GM10248 (cell line): ENCODE measurements at regions of chr5 and their contacts with region 1.

Region 1: DNA sequence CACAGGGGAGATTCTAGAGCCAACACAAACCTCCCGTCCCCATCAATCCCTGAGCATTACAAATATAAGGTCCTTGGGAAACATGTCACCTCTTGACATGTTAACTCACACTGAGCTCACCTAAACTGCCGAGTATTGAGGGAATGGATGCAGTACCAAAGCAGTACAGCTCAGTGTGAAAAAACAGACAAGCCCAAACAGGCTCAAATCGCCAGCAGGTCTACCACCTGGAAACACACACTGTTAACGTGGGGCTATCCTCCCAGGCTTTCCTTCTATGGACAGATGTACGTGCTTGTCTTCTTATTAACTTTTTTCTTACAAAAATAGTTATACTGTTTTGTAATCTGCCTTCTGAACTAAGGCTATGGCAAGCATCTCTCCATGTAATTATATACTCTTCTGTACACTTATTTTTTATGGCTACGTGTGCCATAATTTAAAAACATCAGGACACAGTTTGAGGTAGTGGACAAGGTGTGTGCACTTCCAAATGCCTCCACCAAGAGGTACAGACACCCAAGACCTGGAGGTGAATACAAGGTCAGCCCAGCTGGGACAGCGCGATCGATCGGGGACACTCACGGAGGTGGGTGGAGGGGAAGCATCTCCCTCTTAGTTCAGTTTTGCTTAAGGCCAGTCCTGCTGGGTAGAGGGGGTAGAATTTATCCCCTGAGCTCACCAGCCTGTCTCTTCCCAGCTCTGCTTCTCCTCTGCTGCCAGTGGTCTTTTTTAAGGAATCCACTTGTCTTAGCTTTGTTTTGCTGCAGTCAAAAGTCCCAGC is 76.5 kb downstream of the DAP start:
- DNase-seq: peak; percentile 56
- CTCF ChIP-seq: no peak

Region 2: GRCh38 chr5:10635257-10635866 is 49.1 kb before region 1 on chr5:
- CTCF ChIA-PET with region 1: interaction called, 20 read pairs
- POLR2A ChIA-PET with region 1: interaction called, 16 read pairs
- DNase-seq: peak; percentile 85
- CTCF ChIP-seq: no peak

Region 3: DNA sequence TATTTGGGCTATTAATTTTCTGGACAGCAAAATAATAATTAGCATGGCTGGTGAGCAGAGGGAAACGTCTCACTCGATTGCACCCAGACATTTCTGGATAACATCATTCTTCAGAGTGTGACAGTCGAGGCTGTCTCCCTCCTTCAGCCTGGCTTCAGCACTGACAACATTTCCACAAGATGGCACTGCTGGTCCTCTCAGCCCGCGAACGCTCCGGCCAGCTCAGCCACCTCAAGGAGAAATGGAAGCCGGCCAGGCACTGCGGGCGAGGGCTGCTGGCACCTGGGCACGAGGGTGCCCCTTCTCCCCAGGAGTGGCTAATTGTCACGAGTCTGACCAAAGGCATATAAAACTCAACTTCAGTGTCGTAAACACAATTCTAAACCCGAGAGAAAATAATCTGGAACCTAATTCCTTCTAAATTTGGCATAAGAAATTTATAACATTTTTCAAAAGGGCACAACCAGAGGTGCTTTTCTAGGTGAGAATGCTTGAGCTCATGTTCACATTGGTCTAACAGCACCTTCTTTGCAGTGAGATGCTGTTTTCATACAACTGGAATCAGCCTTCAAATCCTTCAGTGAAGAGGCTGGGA is 10.7 kb after region 1 on chr5:
- CTCF ChIA-PET with region 1: interaction called, 57 read pairs
- POLR2A ChIA-PET with region 1: no interaction called
- DNase-seq: peak; percentile 69
- CTCF ChIP-seq: peak; percentile 87